ENCODE measurements at regions of chr3 and their contacts with region 1.

Region 1: DNA sequence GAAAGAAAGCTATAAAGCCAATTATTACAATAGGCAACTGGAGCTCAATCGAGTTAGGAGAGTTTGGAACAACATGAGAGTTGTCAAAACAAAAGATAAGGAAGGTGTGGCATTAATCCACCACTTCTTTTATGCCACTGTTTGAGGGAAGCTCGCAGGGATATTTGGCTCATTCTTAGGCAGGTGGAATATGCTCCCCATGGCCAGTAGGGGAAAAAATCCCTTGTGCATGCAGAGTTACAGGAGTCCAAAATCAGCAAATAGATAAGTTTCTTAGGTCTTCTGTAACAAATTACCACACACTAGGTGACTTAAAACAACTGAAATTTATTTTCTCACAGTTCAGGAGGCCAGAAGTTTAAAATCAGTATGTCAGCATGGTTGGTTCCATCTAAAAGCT is 135.4 kb upstream of the SYNPR start:
- DNase-seq: no peak
- H3K4me3 ChIP-seq: no peak overlapping the region
- CTCF ChIP-seq: no peak
- POLR2A ChIP-seq: no peak

Region 2: GRCh38 chr3:62843508-62843907 is 299.2 kb before region 1 on chr3:
- intact Hi-C with region 1: no loop called
- DNase-seq: no peak
- H3K4me3 ChIP-seq: no peak overlapping the region
- CTCF ChIP-seq: no peak
- POLR2A ChIP-seq: no peak

Region 3: GRCh38 chr3:62911526-62911925 is 231.2 kb before region 1 on chr3:
- intact Hi-C with region 1: loop called (anchors 10 kb)
- DNase-seq: no peak
- H3K4me3 ChIP-seq: no peak overlapping the region
- CTCF ChIP-seq: no peak
- POLR2A ChIP-seq: no peak

Region 4: DNA sequence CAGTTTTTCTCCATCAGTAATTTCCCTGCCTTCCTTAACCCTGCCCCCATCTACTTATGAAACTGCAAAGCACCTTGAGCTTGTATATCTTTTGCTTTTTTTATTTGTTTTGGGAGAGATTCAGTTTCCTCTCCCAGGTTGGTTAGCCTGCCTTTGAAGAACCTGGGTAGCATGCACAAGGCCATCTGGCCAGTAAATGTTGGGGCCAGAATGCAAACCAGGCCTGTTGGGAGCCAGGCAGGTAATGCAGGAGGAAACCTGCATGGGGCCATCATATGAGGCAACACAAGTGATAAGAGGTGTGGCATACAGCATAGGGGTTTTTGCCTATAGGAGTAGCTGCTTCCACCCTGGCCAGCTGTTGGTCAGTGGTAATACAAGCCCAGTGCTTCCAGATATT is 153.1 kb after region 1 on chr3:
- intact Hi-C with region 1: no loop called
- DNase-seq: no peak
- H3K4me3 ChIP-seq: no peak overlapping the region
- CTCF ChIP-seq: no peak
- POLR2A ChIP-seq: no peak

Measured in lower leg skin (tissue), 4 donors.